ENCODE measurements at regions of chr6 and their contacts with region 1.

Region 1: DNA sequence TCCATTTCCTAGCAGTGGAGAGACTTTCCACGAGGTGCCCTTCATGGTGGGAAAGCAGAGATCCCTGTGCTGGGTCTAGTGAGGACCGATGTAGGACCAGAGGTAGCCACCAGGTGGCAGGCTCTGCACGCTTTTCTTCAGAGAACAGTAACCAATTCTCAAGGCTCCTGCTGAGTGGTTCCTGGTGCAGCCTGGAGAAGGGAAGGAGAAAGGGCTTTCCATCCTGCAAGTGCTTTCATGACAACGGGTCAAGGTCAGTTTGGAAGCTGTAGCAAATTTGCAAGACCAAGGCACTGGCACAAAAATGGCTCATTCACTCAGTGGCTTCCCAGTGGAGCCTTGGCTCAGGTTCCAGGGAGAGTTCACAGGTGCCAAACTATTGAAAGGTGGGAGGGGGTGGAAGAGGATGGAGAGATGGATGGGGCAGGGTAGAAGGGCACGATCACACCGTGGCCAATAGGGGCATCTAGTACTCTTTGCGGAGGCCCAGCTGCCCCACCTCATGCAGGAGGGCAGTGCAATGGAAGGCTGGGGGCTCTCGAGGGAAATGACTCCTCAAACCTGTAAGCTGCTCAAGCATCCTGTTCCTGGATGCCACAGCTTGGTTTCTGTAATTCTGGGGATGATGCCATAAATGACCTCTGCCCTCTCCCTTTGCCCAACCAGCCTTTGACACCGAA is 25.5 kb upstream of the KCNK16 start:
- DNase-seq: peak; percentile 42
- H3K4me3 ChIP-seq: no peak overlapping the region
- H3K27ac ChIP-seq: no peak overlapping the region
- H3K4me1 ChIP-seq: no peaks in the 10 kb centered on the region
- H3K27me3 ChIP-seq: no peaks in the 10 kb centered on the region
- CTCF ChIP-seq: peak; percentile 86

Region 2: GRCh38 chr6:39369987-39370386 is 21.9 kb after region 1 on chr6:
- CTCF ChIA-PET with region 1: no interaction called
- dilution Hi-C with region 1: no loop called
- in situ Hi-C with region 1: no loop called
- intact Hi-C with region 1: no loop called
- DNase-seq: no peak
- H3K4me3 ChIP-seq: no peak overlapping the region
- H3K27ac ChIP-seq: no peak overlapping the region
- H3K4me1 ChIP-seq: no peaks in the 10 kb centered on the region
- H3K27me3 ChIP-seq: no peaks in the 10 kb centered on the region
- CTCF ChIP-seq: peak; percentile 21 to 45

Region 3: GRCh38 chr6:39892490-39893129 is 544.6 kb after region 1 on chr6:
- CTCF ChIA-PET with region 1: no interaction called
- dilution Hi-C with region 1: no loop called
- in situ Hi-C with region 1: no loop called
- intact Hi-C with region 1: loop called (anchors 1 kb)
- DNase-seq: peak; percentile 17
- H3K4me3 ChIP-seq: no peak overlapping the region
- H3K27ac ChIP-seq: no peak overlapping the region
- H3K4me1 ChIP-seq: no peaks in the 10 kb centered on the region
- H3K27me3 ChIP-seq: peaks cover 4% of the 10 kb centered on the region
- CTCF ChIP-seq: peak; percentile 69 to 81

Region 4: GRCh38 chr6:40308533-40309306 is 960.7 kb after region 1 on chr6:
- CTCF ChIA-PET with region 1: no interaction called
- dilution Hi-C with region 1: no loop called
- in situ Hi-C with region 1: loop called in 1 of 2 experiments (anchors 25 kb)
- intact Hi-C with region 1: loop called (anchors 5 kb)
- DNase-seq: peak; percentile 45
- H3K4me3 ChIP-seq: no peak overlapping the region
- H3K27ac ChIP-seq: no peak overlapping the region
- H3K4me1 ChIP-seq: peaks cover 3% of the 10 kb centered on the region
- H3K27me3 ChIP-seq: no peaks in the 10 kb centered on the region
- CTCF ChIP-seq: peak; percentile 86 to 95

Measured in mammary epithelial cell (primary cell).